Left ventricle myocardium inferior (tissue), 1 donor: ENCODE measurements at regions of chr18 and their contacts with region 1.

Region 1: DNA sequence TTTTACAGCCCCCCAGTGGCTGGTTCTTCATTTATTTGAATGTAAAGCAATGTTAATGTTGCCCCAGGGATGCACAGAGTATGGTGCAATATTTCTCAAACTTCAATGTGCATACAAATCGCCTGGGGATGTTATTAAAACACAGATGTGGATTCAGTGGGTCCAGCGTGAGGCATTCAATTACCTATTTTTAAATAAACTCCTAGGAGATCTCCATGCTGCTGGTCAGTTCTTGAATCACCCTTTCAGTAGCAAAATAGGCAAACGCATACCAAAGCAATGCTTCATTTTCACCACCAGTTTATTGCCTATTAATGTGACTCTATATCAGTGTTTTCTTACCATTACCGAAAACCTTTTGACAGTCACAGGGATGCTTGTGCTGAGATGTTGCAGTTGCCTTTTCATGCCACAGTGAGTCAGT is 530.7 kb downstream of the CBLN2 start:
- DNase-seq: no peak
- H3K4me3 ChIP-seq: no peak overlapping the region
- H3K27ac ChIP-seq: no peak overlapping the region
- H3K4me1 ChIP-seq: no peaks in the 10 kb centered on the region
- H3K27me3 ChIP-seq: no peaks in the 10 kb centered on the region
- CTCF ChIP-seq: no peak

Region 2: DNA sequence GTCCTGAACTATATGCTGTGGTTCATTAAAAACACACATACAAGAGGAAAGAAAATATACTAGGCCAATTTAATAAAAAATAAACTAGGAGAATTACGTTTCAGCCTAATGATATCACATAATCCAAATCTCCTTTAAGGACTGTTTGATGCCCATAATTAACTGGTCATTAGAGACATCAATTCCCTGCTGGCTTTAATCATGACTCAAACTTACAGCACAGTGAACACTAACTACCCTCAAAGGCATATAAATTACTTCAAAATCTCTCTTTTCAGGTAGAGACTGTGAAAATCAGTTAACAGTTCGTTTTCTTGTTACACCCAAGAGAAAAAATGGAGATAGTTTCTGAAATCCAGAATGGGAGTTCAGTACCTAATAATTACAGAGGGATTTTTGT is 36.7 kb before region 1 on chr18:
- intact Hi-C with region 1: loop called (anchors 5 kb)
- DNase-seq: no peak
- H3K4me3 ChIP-seq: no peak overlapping the region
- H3K27ac ChIP-seq: no peak overlapping the region
- H3K4me1 ChIP-seq: no peaks in the 10 kb centered on the region
- H3K27me3 ChIP-seq: no peaks in the 10 kb centered on the region
- CTCF ChIP-seq: no peak

Region 3: DNA sequence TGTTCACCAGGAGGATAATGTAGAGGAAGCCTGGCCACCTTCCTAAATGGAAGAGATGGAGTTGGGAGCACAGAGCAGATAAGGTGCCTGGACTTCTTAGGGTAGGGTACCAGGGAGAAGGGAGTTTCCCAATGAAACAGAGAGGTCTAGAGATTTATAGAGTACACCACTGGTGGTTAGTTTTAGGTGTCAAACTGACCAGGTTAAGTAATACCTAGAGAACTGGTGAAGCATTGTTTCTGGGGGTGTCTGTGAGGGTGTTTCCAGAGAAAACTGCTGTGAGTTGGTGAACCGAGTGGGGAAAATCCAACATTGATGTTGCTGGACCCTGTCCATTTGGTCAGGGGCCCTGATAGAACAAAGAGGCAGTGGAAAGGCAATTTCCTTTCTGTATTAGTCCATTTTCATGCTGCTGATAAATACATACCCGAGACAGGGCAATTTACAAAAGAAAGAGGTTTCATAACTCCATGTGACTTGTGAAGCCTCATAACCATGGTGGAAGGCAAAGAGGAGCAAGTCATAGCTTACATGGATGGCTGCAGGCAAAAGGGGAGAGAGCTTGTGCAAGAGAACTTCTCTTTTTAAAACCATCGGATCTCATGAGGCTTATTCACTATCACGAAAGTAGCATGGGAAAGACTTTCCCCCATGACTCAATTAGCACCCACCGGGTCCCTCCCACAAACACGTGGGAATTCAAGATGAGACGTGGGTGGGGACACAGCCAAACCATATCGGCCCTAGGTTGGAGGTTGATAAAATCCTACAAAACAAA is 269.9 kb after region 1 on chr18:
- intact Hi-C with region 1: no loop called
- DNase-seq: no peak
- H3K4me3 ChIP-seq: no peak overlapping the region
- H3K27ac ChIP-seq: no peak overlapping the region
- H3K4me1 ChIP-seq: no peaks in the 10 kb centered on the region
- H3K27me3 ChIP-seq: no peaks in the 10 kb centered on the region
- CTCF ChIP-seq: no peak

Region 4: DNA sequence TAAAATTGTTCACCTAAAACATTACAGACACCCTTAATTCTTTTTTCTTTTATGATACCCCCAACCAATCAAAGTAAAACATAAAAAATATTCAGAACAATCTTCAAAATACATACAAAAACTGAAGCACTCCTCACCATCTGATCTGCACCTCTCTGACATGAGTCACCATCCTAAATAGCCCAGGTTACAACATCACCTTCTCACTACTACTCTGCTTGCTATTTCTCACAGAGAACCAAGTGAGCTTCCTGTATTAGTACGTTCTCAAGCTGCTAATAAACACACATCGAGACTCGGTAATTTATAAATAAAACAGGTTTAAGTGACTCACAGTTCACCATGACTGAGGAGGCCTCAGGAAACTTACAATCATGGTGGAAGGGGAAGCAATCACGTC is 347.2 kb after region 1 on chr18:
- intact Hi-C with region 1: no loop called
- DNase-seq: no peak
- H3K4me3 ChIP-seq: no peak overlapping the region
- H3K27ac ChIP-seq: no peak overlapping the region
- H3K4me1 ChIP-seq: no peaks in the 10 kb centered on the region
- H3K27me3 ChIP-seq: no peaks in the 10 kb centered on the region
- CTCF ChIP-seq: no peak

Region 5: DNA sequence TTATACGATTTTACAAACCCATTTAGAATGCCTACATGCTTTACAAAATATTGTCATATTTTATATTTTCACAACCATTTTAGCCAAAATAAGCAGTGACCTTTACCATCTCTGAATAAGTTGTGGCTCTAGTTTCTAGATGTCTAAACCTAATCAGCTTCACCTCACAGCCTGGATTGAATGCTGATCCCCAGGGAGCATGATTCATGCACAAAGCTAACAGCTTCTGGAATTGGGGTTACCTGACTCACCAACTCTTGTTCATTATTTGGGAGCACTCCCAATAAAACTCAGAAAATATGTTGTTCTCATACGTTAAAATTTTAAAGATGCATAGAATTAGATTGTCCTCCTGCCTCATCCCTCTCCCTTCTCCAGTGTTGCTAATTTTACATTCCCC is 1466.0 kb after region 1 on chr18:
- intact Hi-C with region 1: no loop called
- DNase-seq: no peak
- H3K4me3 ChIP-seq: no peak overlapping the region
- H3K27ac ChIP-seq: no peak overlapping the region
- H3K4me1 ChIP-seq: no peaks in the 10 kb centered on the region
- H3K27me3 ChIP-seq: no peaks in the 10 kb centered on the region
- CTCF ChIP-seq: no peak